GM10248 (cell line): ENCODE measurements at regions of chr3 and their contacts with region 1.

Region 1: GRCh38 chr3:47617086-47618010 is 38.7 kb upstream of the CSPG5 start:
- DNase-seq: no peak
- CTCF ChIP-seq: no peak

Region 2: GRCh38 chr3:47586746-47587145 is 30.6 kb before region 1 on chr3:
- CTCF ChIA-PET with region 1: no interaction called
- POLR2A ChIA-PET with region 1: no interaction called
- DNase-seq: no peak
- CTCF ChIP-seq: no peak

Region 3: GRCh38 chr3:47628426-47628825 is 11.1 kb after region 1 on chr3:
- CTCF ChIA-PET with region 1: interaction called, 11 read pairs
- POLR2A ChIA-PET with region 1: no interaction called
- DNase-seq: no peak
- CTCF ChIP-seq: no peak